ENCODE measurements at regions of chr9 and their contacts with region 1.

Region 1: GRCh38 chr9:72917892-72918509 is 34.9 kb downstream of the ALDH1A1 start:
- DNase-seq: no peak
- ATAC-seq: no peak
- H3K4me3 ChIP-seq: no peak overlapping the region
- H3K27ac ChIP-seq: no peak overlapping the region
- H3K4me1 ChIP-seq: no peaks in the 10 kb centered on the region
- H3K27me3 ChIP-seq: no peaks in the 10 kb centered on the region
- CTCF ChIP-seq: no peak
- POLR2A ChIP-seq: no peak

Region 2: GRCh38 chr9:72974501-72974900 is 56.5 kb after region 1 on chr9:
- intact Hi-C with region 1: loop called in 1 of 10 experiments (anchors 2 kb)
- DNase-seq: no peak
- ATAC-seq: no peak
- H3K4me3 ChIP-seq: no peak overlapping the region
- H3K27ac ChIP-seq: no peak overlapping the region
- H3K4me1 ChIP-seq: no peaks in the 10 kb centered on the region
- H3K27me3 ChIP-seq: no peaks in the 10 kb centered on the region
- CTCF ChIP-seq: no peak
- POLR2A ChIP-seq: no peak

Measured in heart left ventricle (tissue), 16 donors.